H1 (cell line): ENCODE measurements at regions of chr11 and their contacts with region 1.

Region 1: DNA sequence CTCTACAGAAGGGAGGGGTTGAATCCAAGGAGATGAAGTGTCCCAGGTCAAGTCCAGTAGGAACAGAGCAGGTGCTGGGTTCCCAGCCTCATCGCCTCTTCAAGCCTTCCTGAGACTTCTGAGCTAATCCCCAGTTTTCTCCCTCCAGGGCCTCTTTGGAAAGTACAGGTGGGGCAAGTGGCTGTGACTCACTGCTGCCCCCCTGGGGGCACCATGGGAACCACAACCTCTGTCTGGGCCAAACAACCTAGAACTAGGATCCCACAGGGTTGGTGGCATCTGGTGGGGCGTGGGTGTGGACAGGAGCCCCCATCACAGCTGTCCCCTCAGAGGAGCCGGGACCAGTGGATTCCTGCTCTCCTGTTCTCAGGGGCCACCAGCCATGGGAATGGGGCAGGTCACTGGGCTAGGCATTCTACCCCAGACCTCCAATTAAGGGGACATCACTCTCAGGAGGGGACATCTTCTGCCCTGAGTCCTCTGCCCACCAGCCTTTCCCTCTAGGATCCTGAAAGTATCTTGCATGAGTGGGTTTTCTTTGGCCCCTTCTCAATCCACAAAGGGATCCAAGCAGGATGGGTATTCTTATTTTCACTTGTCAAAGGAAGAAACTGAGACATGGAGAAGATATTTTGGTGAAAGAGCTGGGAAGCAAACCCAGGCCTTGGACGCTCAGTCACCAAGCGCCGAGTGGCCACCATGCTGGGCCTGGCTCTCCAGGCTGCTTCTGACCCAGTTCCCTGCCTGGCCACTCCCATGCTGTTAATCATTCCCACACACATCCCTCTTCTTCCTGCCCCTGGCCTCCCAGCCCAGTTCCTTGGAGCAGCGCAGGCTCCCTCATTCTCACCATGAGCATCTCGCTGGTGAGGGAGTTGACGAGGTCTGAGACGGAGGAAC is 23.8 kb downstream of the LRRC10B start:
- DNase-seq: peak in 1 of 2 experiments; percentile 90
- H3K4me3 ChIP-seq: no peak overlapping the region
- H3K27ac ChIP-seq: no peak overlapping the region
- H3K4me1 ChIP-seq: peaks cover 0 to 11% (median 4%) of the 10 kb centered on the region in 4 experiments; a peak in 5 of 7 replicates
- H3K27me3 ChIP-seq: no peaks in the 10 kb centered on the region
- CTCF ChIP-seq: peak in 2 of 3 experiments; percentile 89 to 94; a peak in 3 of 4 replicates
- EP300 ChIP-seq: no peak
- POLR2A ChIP-seq: no peak
- RAD21 ChIP-seq: peak; percentile 69 to 81

Region 2: DNA sequence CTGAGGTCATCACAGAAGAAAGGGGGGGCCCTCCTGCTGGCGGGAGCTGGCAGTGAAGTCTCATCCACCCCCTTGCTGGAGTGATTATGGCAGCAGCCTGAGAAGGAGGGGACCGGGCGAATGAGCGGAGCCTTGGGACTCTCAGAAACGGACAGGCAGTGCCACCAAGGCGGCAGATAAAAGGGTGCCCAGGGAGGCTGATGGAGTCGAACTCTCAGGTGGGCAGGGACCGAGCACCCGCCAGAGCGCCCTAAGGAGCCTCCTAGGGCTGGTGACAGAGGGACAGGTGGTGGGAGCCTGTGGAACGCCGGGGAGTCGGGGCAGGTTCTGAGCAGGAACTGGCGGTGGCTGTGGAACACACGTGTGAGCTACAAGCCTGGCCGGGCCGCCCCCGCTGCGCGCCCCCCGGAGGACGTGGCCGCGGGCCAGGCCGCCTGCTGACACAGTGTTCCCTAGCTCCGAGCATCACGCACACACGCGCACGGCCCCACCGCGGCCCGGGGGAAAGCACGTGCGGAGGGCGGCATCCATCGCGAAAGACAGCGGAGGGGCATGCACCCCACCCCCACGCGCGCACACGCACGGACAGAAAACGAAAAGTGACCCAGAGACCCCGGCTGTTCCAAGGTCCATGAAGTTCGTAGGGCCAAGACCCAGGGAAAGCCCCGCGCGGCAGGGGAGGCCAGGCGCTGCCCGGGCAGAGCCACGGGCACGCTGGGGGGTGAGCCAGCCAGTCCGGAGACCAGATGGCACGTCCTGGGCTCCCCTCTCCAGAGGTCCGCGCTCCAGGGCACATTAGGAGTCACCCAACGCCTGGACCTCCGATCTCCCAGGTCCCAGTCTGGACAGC is 238.3 kb before region 1 on chr11:
- CTCF ChIA-PET with region 1: no interaction called
- POLR2A ChIA-PET with region 1: no interaction called
- DNase-seq: peak in 1 of 2 experiments; percentile 57
- H3K4me3 ChIP-seq: peak overlapping the region; percentile 54 to 82 (median 78)
- H3K27ac ChIP-seq: peak overlapping the region; percentile 57; the same call in 1 of the 2 replicates
- H3K4me1 ChIP-seq: peaks cover 2 to 9% (median 8%) of the 10 kb centered on the region in 4 experiments
- H3K27me3 ChIP-seq: peaks cover 1 to 12% (median 7%) of the 10 kb centered on the region in 4 experiments; a peak in 6 of 7 replicates
- CTCF ChIP-seq: no peak
- EP300 ChIP-seq: no peak
- POLR2A ChIP-seq: no peak; a peak in 1 of 3 replicates
- RAD21 ChIP-seq: no peak

Region 3: DNA sequence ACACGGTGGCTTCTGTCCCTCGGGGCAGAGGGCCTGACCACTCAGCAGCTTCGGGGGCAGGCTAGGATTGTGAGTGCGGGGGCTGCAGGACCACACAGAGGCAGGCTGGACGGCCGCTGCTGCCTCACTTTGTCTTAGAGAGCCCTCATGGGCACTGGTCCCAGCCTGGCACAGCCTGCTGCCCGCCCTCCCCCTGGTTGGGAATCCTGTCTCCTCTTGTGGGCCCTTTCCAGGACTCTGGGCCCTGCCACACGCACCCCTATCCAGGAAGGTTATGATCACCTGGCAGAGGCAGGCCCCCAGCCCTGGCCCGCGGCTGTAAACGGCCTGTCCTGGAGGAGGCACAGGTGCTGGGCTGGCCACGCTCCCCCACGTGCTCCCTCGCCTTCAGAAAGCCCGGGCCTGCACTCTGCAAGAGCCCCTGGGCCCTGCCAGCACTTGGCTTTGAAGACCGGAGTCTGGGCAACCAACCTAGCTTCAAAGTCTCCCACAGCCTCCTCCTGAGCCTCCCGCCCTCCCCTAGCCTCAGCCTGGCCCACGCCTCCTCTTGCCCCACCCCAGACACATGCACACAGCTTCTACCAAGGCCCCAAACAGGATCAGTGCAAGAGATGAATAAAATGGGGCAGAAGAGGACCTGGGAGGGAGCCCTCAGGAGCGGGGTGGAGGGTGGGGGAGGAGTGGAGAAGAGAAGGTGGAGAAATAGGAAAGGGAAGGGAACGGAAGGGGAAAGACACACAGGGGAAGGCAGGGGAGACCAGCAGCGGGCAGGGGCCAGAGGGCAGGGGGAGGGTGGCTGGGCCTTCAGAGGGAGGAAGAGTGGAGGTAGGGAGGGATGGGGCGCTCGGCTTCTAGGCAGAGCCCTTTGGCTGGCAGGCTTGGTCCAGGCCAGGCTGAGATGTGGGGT is 17.5 kb after region 1 on chr11:
- CTCF ChIA-PET with region 1: interaction called, 76 read pairs
- POLR2A ChIA-PET with region 1: no interaction called
- DNase-seq: no peak
- H3K4me3 ChIP-seq: no peak overlapping the region
- H3K27ac ChIP-seq: no peak overlapping the region
- H3K4me1 ChIP-seq: peaks cover 0 to 25% (median 8%) of the 10 kb centered on the region in 4 experiments; a peak in 5 of 7 replicates
- H3K27me3 ChIP-seq: peaks cover 0 to 8% (median 8%) of the 10 kb centered on the region in 4 experiments; a peak in 5 of 7 replicates
- CTCF ChIP-seq: no peak
- EP300 ChIP-seq: no peak
- POLR2A ChIP-seq: no peak
- RAD21 ChIP-seq: no peak

Region 4: DNA sequence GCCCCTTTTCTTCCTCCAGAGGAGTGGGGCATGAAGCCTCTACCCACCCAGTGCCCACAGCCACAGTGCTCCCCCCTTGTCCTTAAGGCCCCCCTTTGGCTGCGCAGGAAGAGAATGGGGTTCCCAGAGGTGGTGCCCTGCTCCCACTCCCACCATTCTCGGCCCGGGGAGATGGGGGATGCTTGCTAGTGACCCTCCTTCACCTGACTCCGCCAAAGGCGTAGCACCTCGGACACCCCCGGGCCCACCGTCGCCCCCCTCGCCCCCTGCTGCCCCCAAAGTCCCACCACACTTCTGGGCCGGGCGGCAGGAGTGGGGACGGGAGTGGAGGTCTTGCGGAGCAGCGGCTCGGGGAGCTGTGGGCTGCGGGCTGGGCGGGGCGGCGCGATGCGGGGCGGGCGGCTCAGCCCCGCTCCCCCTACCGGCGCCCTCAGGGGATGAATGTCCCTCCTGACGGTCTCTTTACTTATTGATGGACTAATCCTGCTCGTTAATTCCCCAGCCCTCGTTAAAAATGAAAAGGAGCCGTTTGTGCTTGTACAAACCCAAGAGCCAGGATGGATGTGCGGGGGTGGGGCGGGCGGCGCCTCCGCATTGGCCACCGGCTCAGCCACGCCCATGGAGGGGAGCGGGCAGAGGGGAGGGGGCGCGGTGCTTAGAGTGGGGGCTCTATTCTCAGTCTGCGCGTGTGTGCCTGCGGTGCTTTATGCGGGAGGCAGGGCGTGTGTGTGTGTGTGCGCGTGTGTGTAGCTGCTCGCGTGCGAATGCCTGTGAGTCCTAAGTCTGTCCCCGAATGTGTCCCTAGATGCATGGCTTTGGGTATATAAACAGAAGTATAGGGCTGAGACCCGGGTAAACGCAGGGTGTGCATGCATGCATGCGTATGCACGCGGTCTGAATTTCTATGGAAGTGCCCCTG is 22.9 kb after region 1 on chr11:
- CTCF ChIA-PET with region 1: interaction called, 76 read pairs
- POLR2A ChIA-PET with region 1: no interaction called
- DNase-seq: peak in 1 of 2 experiments; percentile 72
- H3K4me3 ChIP-seq: peak overlapping the region; percentile 11 to 62 (median 34); a peak in 7 of 8 replicates
- H3K27ac ChIP-seq: no peak overlapping the region
- H3K4me1 ChIP-seq: peaks cover 0 to 27% (median 14%) of the 10 kb centered on the region in 4 experiments; a peak in 4 of 7 replicates
- H3K27me3 ChIP-seq: peaks cover 0 to 21% (median 20%) of the 10 kb centered on the region in 4 experiments; a peak in 6 of 7 replicates
- CTCF ChIP-seq: peak; percentile 32 to 45 (median 38); a peak in 3 of 4 replicates
- EP300 ChIP-seq: no peak
- POLR2A ChIP-seq: no peak
- RAD21 ChIP-seq: peak in 1 of 2 experiments; percentile 16; a peak in 1 of 4 replicates

Region 5: GRCh38 chr11:61645179-61645868 is 112.9 kb after region 1 on chr11:
- CTCF ChIA-PET with region 1: interaction called, 10 read pairs
- POLR2A ChIA-PET with region 1: no interaction called
- DNase-seq: no peak
- H3K4me3 ChIP-seq: no peak overlapping the region
- H3K27ac ChIP-seq: no peak overlapping the region
- H3K4me1 ChIP-seq: peaks cover 0 to 3% (median 0%) of the 10 kb centered on the region in 4 experiments; a peak in 1 of 7 replicates
- H3K27me3 ChIP-seq: no peaks in the 10 kb centered on the region
- CTCF ChIP-seq: no peak
- EP300 ChIP-seq: no peak
- POLR2A ChIP-seq: no peak
- RAD21 ChIP-seq: no peak

Region 6: DNA sequence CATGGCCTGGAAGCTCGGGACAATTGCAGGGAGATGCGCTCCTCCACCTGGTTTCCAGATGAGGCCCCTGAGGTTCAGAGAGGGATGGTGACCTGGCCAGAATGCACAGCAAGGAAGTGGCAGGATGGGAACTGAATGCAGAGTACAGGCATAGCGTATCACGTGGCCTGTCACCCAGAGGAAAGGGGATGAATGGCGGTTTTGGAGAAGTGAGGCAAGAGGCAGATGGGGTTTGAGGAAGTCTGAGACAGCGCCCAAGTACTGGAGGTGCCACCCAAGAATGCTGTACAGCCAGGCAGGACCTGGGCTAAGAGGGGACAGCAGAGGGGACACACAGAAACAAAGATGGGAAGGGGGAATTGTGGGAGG is 380.1 kb after region 1 on chr11:
- CTCF ChIA-PET with region 1: no interaction called
- POLR2A ChIA-PET with region 1: no interaction called
- DNase-seq: no peak
- H3K4me3 ChIP-seq: no peak overlapping the region
- H3K27ac ChIP-seq: no peak overlapping the region
- H3K4me1 ChIP-seq: peaks cover 0 to 21% (median 10%) of the 10 kb centered on the region in 4 experiments; a peak in 6 of 7 replicates
- H3K27me3 ChIP-seq: peaks cover 0 to 9% (median 6%) of the 10 kb centered on the region in 4 experiments; a peak in 4 of 7 replicates
- CTCF ChIP-seq: no peak
- EP300 ChIP-seq: no peak
- POLR2A ChIP-seq: no peak
- RAD21 ChIP-seq: no peak